Transverse colon (tissue), 4 donors: ENCODE measurements at regions of chr11 and their contacts with region 1.

Region 1: GRCh38 chr11:69010964-69011623 is 2.0 kb downstream of the MRGPRF start:
- DNase-seq: peak; percentile 78
- H3K4me3 ChIP-seq: peak overlapping the region; percentile 47 to 66 (median 50)
- H3K27ac ChIP-seq: peak overlapping the region; percentile 87 to 98 (median 94)
- H3K4me1 ChIP-seq: peaks cover 24 to 64% (median 43%) of the 10 kb centered on the region in 4 donors
- H3K27me3 ChIP-seq: peaks cover 47% of the 10 kb centered on the region
- CTCF ChIP-seq: no peak
- EP300 ChIP-seq: no peak
- POLR2A ChIP-seq: peak; percentile 43

Region 2: GRCh38 chr11:68927280-68928135 is 83.6 kb before region 1 on chr11:
- in situ Hi-C with region 1: no loop called
- intact Hi-C with region 1: loop called (anchors 5 kb)
- DNase-seq: peak; percentile 37
- H3K4me3 ChIP-seq: no peak overlapping the region
- H3K27ac ChIP-seq: peak overlapping the region; percentile 68 to 73 (median 70)
- H3K4me1 ChIP-seq: peaks cover 0 to 18% (median 12%) of the 10 kb centered on the region in 4 donors
- H3K27me3 ChIP-seq: no peaks in the 10 kb centered on the region
- CTCF ChIP-seq: no peak
- EP300 ChIP-seq: no peak
- POLR2A ChIP-seq: no peak

Region 3: GRCh38 chr11:69048718-69049489 is 37.8 kb after region 1 on chr11 and contains the start of gene TPCN2:
- in situ Hi-C with region 1: no loop called
- intact Hi-C with region 1: loop called (anchors 2 kb)
- DNase-seq: peak; percentile 93
- H3K4me3 ChIP-seq: peak within 1 kb of the TSS; percentile 71 to 94 (median 80)
- H3K27ac ChIP-seq: peak within 1 kb of the TSS; percentile 89 to 94 (median 93)
- H3K4me1 ChIP-seq: peaks cover 9 to 49% (median 26%) of the 10 kb centered on the region in 4 donors
- H3K27me3 ChIP-seq: no peaks in the 10 kb centered on the region
- CTCF ChIP-seq: no peak
- EP300 ChIP-seq: no peak
- POLR2A ChIP-seq: peak; percentile 72
- total RNA-seq, gene TPCN2: 16.8 to 25.4 (median 20.7) TPM

Region 4: DNA sequence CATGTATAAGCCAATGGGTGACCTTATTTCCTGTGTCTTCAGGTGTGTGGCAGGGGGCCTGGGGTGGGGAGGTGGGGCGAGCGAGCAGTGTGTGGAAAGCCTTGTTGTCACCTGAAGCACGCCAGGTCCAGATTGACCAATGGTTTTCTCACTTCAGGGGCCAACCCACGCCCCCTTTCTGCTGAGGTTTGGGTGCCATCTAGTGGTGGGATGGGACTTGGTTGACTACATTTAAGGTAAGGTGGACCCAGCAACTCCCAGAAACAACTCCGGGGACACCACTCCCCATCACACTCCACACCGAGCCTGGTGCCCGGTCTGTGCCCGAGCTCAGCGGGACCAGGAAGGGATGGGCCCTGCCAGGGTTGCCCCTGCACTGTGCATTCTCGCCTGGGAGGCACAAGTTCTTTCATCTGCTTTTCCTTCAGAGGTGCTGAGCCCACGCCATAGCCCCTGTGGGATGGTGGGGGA is 77.6 kb after region 1 on chr11:
- in situ Hi-C with region 1: no loop called
- intact Hi-C with region 1: loop called (anchors 5 kb)
- DNase-seq: peak; percentile 79
- H3K4me3 ChIP-seq: no peak overlapping the region
- H3K27ac ChIP-seq: peak overlapping the region in 3 of 4 donors; percentile 70 to 85 (median 73)
- H3K4me1 ChIP-seq: peaks cover 0 to 14% (median 4%) of the 10 kb centered on the region in 4 donors
- H3K27me3 ChIP-seq: no peaks in the 10 kb centered on the region
- CTCF ChIP-seq: peak; percentile 71 to 75 (median 72)
- EP300 ChIP-seq: no peak
- POLR2A ChIP-seq: no peak